ENCODE measurements at regions of chr18 and their contacts with region 1.

Region 1: GRCh38 chr18:47772374-47773248 is 157.8 kb downstream of the SMAD2 start:
- DNase-seq: peak; percentile 20 to 62 (median 41)
- H3K4me3 ChIP-seq: no peak overlapping the region
- H3K4me3 Mint-ChIP-seq: no peak overlapping the region
- H3K27ac ChIP-seq: no peak overlapping the region
- H3K27ac Mint-ChIP-seq: no peak overlapping the region
- H3K4me1 ChIP-seq: no peaks in the 10 kb centered on the region
- H3K4me1 Mint-ChIP-seq: peaks cover 0 to 3% (median 0%) of the 10 kb centered on the region in 3 donors
- H3K27me3 ChIP-seq: no peaks in the 10 kb centered on the region
- H3K27me3 Mint-ChIP-seq: peaks cover 4 to 8% of the 10 kb centered on the region in 2 donors

Region 2: GRCh38 chr18:47737956-47738355 is 34.7 kb before region 1 on chr18:
- CTCF ChIA-PET with region 1: no interaction called
- POLR2A ChIA-PET with region 1: interaction called, 15 read pairs
- DNase-seq: no peak
- H3K4me3 ChIP-seq: no peak overlapping the region
- H3K4me3 Mint-ChIP-seq: no peak overlapping the region
- H3K27ac ChIP-seq: no peak overlapping the region
- H3K27ac Mint-ChIP-seq: no peak overlapping the region
- H3K4me1 ChIP-seq: no peaks in the 10 kb centered on the region
- H3K4me1 Mint-ChIP-seq: no peaks in the 10 kb centered on the region
- H3K27me3 ChIP-seq: peaks cover 5% of the 10 kb centered on the region
- H3K27me3 Mint-ChIP-seq: peaks cover 17 to 41% of the 10 kb centered on the region in 2 donors

Region 3: DNA sequence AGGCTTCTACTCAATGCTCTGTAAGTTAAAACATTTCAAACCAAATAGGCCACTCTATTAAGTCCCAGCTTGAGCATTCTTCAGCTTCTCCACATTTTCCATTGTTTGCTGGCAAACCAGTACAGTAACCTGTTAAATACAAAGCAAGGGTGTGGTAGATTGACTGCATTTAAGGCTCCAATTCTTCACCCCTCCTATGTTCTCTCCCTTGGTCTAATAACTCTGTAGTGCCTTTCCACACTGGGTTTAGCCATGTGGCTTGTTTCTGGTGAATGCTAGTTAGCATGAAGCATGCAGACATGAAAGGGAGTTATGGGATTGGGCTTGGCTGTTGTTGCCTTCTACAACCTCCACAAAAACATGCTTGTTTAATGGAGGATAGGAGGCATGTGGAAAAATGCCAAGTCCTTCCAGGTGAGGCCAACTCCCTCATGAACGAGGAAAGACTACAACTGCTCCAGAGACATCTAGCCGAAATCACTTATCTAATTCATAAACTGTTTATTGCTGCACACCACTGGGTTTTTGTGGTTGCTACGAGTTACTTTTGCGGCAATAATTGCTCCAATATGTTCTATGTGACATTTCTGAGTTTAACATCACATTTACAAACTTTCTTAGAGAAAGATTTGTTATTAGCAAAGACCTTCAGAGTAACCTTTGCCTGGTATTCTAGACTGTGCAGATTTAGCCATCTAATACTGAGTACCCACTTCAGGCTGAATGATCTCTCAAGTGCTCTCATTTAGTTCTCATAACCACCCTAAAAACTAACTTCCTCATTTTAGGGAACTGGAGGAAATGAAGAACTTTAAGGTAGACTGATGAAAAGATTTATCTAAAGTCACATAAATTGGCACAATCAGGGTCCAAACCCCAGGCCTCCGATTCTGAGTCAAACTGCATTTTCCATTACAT is 53.8 kb after region 1 on chr18:
- CTCF ChIA-PET with region 1: no interaction called
- POLR2A ChIA-PET with region 1: no interaction called
- DNase-seq: no peak
- H3K4me3 ChIP-seq: no peak overlapping the region
- H3K4me3 Mint-ChIP-seq: peak overlapping the region in 1 of 7 donors; percentile 37
- H3K27ac ChIP-seq: no peak overlapping the region
- H3K27ac Mint-ChIP-seq: no peak overlapping the region
- H3K4me1 ChIP-seq: no peaks in the 10 kb centered on the region
- H3K4me1 Mint-ChIP-seq: peaks cover 0 to 5% (median 0%) of the 10 kb centered on the region in 3 donors
- H3K27me3 ChIP-seq: no peaks in the 10 kb centered on the region
- H3K27me3 Mint-ChIP-seq: no peaks in the 10 kb centered on the region

Region 4: GRCh38 chr18:47997338-47997780 is 224.7 kb after region 1 on chr18:
- CTCF ChIA-PET with region 1: interaction called, 11 read pairs
- POLR2A ChIA-PET with region 1: no interaction called
- DNase-seq: peak in 1 of 5 donors; percentile 10
- H3K4me3 ChIP-seq: no peak overlapping the region
- H3K4me3 Mint-ChIP-seq: no peak overlapping the region
- H3K27ac ChIP-seq: no peak overlapping the region
- H3K27ac Mint-ChIP-seq: no peak overlapping the region
- H3K4me1 ChIP-seq: no peaks in the 10 kb centered on the region
- H3K4me1 Mint-ChIP-seq: no peaks in the 10 kb centered on the region
- H3K27me3 ChIP-seq: no peaks in the 10 kb centered on the region
- H3K27me3 Mint-ChIP-seq: peaks cover 3 to 11% of the 10 kb centered on the region in 2 donors